HCT116 (cell line): ENCODE measurements at regions of chr10 and their contacts with region 1.

Region 1: GRCh38 chr10:64733980-64734379 is 1212.8 kb downstream of the REEP3 start:
- DNase-seq: peak; percentile 33
- ATAC-seq: peak; percentile 73
- H3K4me3 ChIP-seq: no peak overlapping the region
- H3K27ac ChIP-seq: no peak overlapping the region
- H3K4me1 ChIP-seq: peaks cover 0 to 4% of the 10 kb centered on the region in 2 experiments; a peak in 1 of 4 replicates
- H3K27me3 ChIP-seq: no peaks in the 10 kb centered on the region
- CTCF ChIP-seq: peak; percentile 37 to 68 (median 39); a peak in 4 of 6 replicates
- POLR2A ChIP-seq: no peak
- RAD21 ChIP-seq: peak; percentile 69

Region 2: GRCh38 chr10:64041185-64041988 is 692.6 kb before region 1 on chr10:
- CTCF ChIA-PET with region 1: no interaction called
- POLR2A ChIA-PET with region 1: no interaction called
- RAD21 ChIA-PET with region 1: no interaction called
- intact Hi-C with region 1: loop called (anchors 5 kb)
- DNase-seq: peak; percentile 68
- ATAC-seq: peak; percentile 98
- H3K4me3 ChIP-seq: peak overlapping the region in 1 of 2 experiments; percentile 21; a peak in 1 of 4 replicates
- H3K27ac ChIP-seq: no peak overlapping the region
- H3K4me1 ChIP-seq: peaks cover 0 to 4% of the 10 kb centered on the region in 2 experiments; a peak in 1 of 4 replicates
- H3K27me3 ChIP-seq: no peaks in the 10 kb centered on the region
- CTCF ChIP-seq: peak; percentile 99 to 100 (median 99)
- POLR2A ChIP-seq: no peak
- RAD21 ChIP-seq: peak; percentile 95

Region 3: GRCh38 chr10:65320236-65321026 is 586.5 kb after region 1 on chr10:
- CTCF ChIA-PET with region 1: no interaction called
- POLR2A ChIA-PET with region 1: no interaction called
- RAD21 ChIA-PET with region 1: no interaction called
- intact Hi-C with region 1: no loop called
- DNase-seq: no peak
- ATAC-seq: no peak
- H3K4me3 ChIP-seq: no peak overlapping the region
- H3K27ac ChIP-seq: no peak overlapping the region
- H3K4me1 ChIP-seq: no peaks in the 10 kb centered on the region
- H3K27me3 ChIP-seq: no peaks in the 10 kb centered on the region
- CTCF ChIP-seq: no peak
- POLR2A ChIP-seq: no peak
- RAD21 ChIP-seq: no peak

Region 4: DNA sequence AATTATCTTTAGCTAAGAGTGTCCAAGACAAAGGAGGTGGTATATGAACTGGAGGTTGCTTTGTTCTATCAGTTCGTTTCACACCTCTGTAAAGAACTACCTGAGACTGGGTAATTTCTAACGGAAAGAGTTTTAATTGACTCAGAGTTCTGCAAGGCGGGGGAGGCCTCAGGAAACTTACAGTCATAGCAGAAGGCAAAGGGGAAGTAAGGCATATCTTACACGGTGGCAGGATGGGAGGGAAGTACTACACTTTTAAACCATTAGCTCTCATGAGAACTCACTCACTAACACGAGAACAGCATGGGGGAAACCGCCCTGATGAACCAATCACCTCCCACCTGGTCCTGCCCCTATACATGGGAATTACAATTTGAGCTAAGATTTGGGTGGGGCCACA is 989.5 kb after region 1 on chr10:
- CTCF ChIA-PET with region 1: no interaction called
- POLR2A ChIA-PET with region 1: no interaction called
- RAD21 ChIA-PET with region 1: no interaction called
- intact Hi-C with region 1: no loop called
- DNase-seq: no peak
- ATAC-seq: no peak
- H3K4me3 ChIP-seq: no peak overlapping the region
- H3K27ac ChIP-seq: no peak overlapping the region
- H3K4me1 ChIP-seq: no peaks in the 10 kb centered on the region
- H3K27me3 ChIP-seq: no peaks in the 10 kb centered on the region
- CTCF ChIP-seq: no peak
- POLR2A ChIP-seq: no peak
- RAD21 ChIP-seq: no peak

Region 5: GRCh38 chr10:66180581-66181318 is 1446.8 kb after region 1 on chr10:
- CTCF ChIA-PET with region 1: no interaction called
- POLR2A ChIA-PET with region 1: no interaction called
- RAD21 ChIA-PET with region 1: no interaction called
- intact Hi-C with region 1: loop called (anchors 2 kb)
- DNase-seq: peak; percentile 47
- ATAC-seq: peak; percentile 58
- H3K4me3 ChIP-seq: no peak overlapping the region
- H3K27ac ChIP-seq: no peak overlapping the region
- H3K4me1 ChIP-seq: no peaks in the 10 kb centered on the region
- H3K27me3 ChIP-seq: no peaks in the 10 kb centered on the region
- CTCF ChIP-seq: peak; percentile 40 to 69 (median 50); a peak in 5 of 6 replicates
- POLR2A ChIP-seq: no peak
- RAD21 ChIP-seq: peak; percentile 69

Region 6: GRCh38 chr10:66627156-66627555 is 1893.2 kb after region 1 on chr10:
- CTCF ChIA-PET with region 1: no interaction called
- POLR2A ChIA-PET with region 1: no interaction called
- RAD21 ChIA-PET with region 1: no interaction called
- intact Hi-C with region 1: loop called (anchors 10 kb)
- DNase-seq: peak; percentile 66
- ATAC-seq: peak; percentile 100
- H3K4me3 ChIP-seq: no peak overlapping the region
- H3K27ac ChIP-seq: no peak overlapping the region
- H3K4me1 ChIP-seq: no peaks in the 10 kb centered on the region
- H3K27me3 ChIP-seq: no peaks in the 10 kb centered on the region
- CTCF ChIP-seq: peak; percentile 44 to 61 (median 59); a peak in 5 of 6 replicates
- POLR2A ChIP-seq: no peak
- RAD21 ChIP-seq: peak; percentile 72